AG04450 (cell line): ENCODE measurements at regions of chr14 and their contacts with region 1.

Region 1: GRCh38 chr14:61475316-61475715 is 153.9 kb downstream of the PRKCH start:
- DNase-seq: peak; percentile 43
- H3K4me3 ChIP-seq: no peak overlapping the region
- H3K27ac ChIP-seq: no peak overlapping the region
- H3K27me3 ChIP-seq: no peaks in the 10 kb centered on the region
- CTCF ChIP-seq: peak; percentile 60

Region 2: DNA sequence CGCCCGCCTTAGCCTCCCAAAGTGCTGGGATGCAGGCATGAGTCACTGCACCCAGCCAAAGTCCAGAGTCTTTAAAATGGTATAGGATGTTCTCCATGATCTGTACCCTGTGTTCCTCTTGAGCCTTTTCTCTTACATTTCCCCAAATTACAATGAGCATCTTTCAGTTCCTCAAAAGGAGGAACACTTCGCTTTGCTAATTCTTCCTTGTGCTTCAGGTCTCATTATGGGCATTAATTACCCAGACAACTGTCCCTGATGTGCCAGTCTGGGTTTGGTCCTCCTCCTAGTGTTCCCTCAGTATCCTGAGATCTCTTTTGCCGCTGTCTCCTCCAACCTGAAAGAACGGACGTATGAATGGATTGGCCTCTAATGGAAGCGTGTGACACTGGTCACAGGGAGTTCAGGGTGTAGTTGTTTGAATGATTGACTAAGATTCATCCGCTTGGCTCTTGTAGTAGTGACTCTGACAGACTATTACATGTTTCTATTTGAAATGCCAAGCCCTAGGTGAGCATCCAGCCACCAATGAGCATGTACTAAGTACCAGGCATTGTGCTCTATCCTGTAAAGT is 145.8 kb before region 1 on chr14:
- CTCF ChIA-PET with region 1: no interaction called
- POLR2A ChIA-PET with region 1: no interaction called
- DNase-seq: no peak
- H3K4me3 ChIP-seq: no peak overlapping the region
- H3K27ac ChIP-seq: no peak overlapping the region
- H3K27me3 ChIP-seq: peaks cover 8% of the 10 kb centered on the region
- CTCF ChIP-seq: no peak

Region 3: DNA sequence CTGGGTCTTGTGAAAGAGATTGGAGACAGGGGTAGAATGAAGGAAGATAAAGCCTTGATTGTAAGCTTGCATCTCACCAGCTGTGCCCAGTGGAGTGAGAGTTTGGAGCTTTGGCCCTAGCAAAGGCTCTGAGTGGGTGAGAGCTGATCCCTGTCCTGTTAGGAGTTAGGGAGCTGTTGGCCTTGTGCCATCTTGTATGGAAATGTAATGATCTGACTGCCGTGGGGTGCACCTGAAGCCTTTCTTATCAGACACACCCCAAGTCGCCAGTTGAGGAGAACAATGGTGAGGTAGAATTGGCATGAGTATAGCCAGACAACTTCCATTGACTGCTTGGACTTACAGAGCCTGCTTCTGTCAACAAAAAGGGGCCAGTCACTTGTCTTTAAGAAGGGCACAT is 23.8 kb before region 1 on chr14:
- CTCF ChIA-PET with region 1: no interaction called
- POLR2A ChIA-PET with region 1: no interaction called
- DNase-seq: no peak
- H3K4me3 ChIP-seq: no peak overlapping the region
- H3K27ac ChIP-seq: no peak overlapping the region
- H3K27me3 ChIP-seq: peaks cover 25% of the 10 kb centered on the region
- CTCF ChIP-seq: no peak

Region 4: DNA sequence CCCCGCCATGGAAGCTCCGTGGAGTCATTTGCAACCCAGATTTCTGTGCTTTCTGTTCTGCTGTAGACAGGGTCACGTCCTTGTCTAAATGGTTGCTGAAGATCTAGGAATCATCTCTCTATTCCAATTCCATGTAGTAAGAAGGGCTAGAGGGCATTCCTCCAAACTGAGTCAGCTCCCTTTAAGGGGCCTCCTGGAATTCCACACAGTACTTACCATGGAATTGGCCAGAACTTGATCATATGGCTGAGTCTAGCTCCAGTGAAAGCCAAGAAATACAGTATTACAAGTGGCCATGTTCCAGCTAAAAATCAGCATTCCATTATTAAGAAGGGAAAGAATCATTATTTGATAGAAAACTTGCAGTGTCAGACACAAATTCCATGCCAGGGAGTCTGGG is 17.9 kb after region 1 on chr14:
- CTCF ChIA-PET with region 1: interaction called, 12 read pairs
- POLR2A ChIA-PET with region 1: interaction called, 5 read pairs
- DNase-seq: peak; percentile 81
- H3K4me3 ChIP-seq: no peak overlapping the region
- H3K27ac ChIP-seq: peak overlapping the region; percentile 32
- H3K27me3 ChIP-seq: no peaks in the 10 kb centered on the region
- CTCF ChIP-seq: no peak

Region 5: DNA sequence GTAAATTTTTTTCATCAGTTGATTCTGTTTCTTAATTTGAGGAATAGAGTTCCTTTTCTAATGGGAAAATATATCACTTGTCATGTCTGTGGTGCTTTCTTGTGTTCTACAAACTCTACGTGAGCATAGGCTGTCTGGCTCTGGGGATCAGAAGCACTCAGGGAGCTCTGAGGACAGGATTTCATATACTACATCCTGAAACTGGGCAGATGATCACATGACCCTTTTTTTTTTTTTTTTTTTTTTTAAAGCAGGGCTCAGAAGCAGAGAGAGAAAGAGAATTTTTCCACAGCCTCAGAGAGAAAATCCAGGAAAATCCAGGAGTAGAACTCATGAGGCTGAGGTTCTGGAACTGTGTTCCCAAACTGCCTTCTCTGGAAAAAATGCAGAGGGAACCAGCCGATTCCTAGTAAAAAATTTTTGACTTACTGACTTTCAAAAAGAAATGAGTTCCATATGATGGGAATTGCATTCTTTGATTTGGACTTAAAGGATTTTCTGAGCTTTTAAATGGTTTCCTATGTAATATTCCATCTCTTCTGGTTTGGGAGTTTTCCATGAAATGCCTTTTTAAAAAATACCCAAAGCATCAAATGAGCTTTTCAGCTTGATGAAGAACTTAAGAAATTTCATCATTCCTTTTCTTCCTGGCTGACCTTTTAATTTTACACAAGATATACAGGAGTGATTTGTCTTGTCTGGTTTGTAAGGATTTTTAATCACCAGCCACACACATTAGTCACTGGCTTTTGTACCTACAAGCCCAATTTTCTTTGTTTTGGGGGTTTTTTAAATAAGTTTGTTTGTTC is 36.9 kb after region 1 on chr14:
- CTCF ChIA-PET with region 1: interaction called, 9 read pairs
- POLR2A ChIA-PET with region 1: interaction called, 12 read pairs
- DNase-seq: no peak
- H3K4me3 ChIP-seq: no peak overlapping the region
- H3K27ac ChIP-seq: no peak overlapping the region
- H3K27me3 ChIP-seq: no peaks in the 10 kb centered on the region
- CTCF ChIP-seq: no peak

Region 6: GRCh38 chr14:61698206-61698980 is 223.1 kb after region 1 on chr14:
- CTCF ChIA-PET with region 1: interaction called, 11 read pairs
- POLR2A ChIA-PET with region 1: interaction called, 5 read pairs
- DNase-seq: no peak
- H3K4me3 ChIP-seq: peak overlapping the region; percentile 83
- H3K27ac ChIP-seq: no peak overlapping the region
- H3K27me3 ChIP-seq: no peaks in the 10 kb centered on the region
- CTCF ChIP-seq: no peak

Region 7: GRCh38 chr14:61761959-61762786 is 286.9 kb after region 1 on chr14 and contains the start of gene SNAPC1:
- CTCF ChIA-PET with region 1: interaction called, 19 read pairs
- POLR2A ChIA-PET with region 1: no interaction called
- DNase-seq: peak; percentile 97
- H3K4me3 ChIP-seq: peak within 1 kb of the TSS; percentile 95
- H3K27ac ChIP-seq: peak within 1 kb of the TSS; percentile 58
- H3K27me3 ChIP-seq: no peaks in the 10 kb centered on the region
- CTCF ChIP-seq: no peak
- polyA plus RNA-seq, gene SNAPC1: 11.3 and 18.6 TPM in 2 replicates